ENCODE measurements at regions of chr7 and their contacts with region 1.

Region 1: GRCh38 chr7:151631968-151632749 is 112.5 kb upstream of the RHEB start:
- DNase-seq: peak; percentile 89
- H3K4me3 Mint-ChIP-seq: peak overlapping the region; percentile 100
- H3K27ac Mint-ChIP-seq: peak overlapping the region; percentile 100
- H3K4me1 Mint-ChIP-seq: peaks cover 25% of the 10 kb centered on the region
- H3K27me3 Mint-ChIP-seq: no peaks in the 10 kb centered on the region

Region 2: GRCh38 chr7:151351027-151351426 is 281.1 kb before region 1 on chr7:
- CTCF ChIA-PET with region 1: interaction called, 17 read pairs
- POLR2A ChIA-PET with region 1: interaction called, 8 read pairs
- DNase-seq: peak; percentile 57
- H3K4me3 Mint-ChIP-seq: peak overlapping the region; percentile 69
- H3K27ac Mint-ChIP-seq: peak overlapping the region; percentile 95
- H3K4me1 Mint-ChIP-seq: peaks cover 57% of the 10 kb centered on the region
- H3K27me3 Mint-ChIP-seq: no peaks in the 10 kb centered on the region

Region 3: GRCh38 chr7:151519765-151520418 is 112.3 kb before region 1 on chr7 and contains the start of gene RHEB:
- CTCF ChIA-PET with region 1: interaction called, 11 read pairs
- POLR2A ChIA-PET with region 1: interaction called, 43 read pairs
- DNase-seq: peak; percentile 99
- H3K4me3 Mint-ChIP-seq: peak within 1 kb of the TSS; percentile 92
- H3K27ac Mint-ChIP-seq: peak within 1 kb of the TSS; percentile 100
- H3K4me1 Mint-ChIP-seq: peaks cover 42% of the 10 kb centered on the region
- H3K27me3 Mint-ChIP-seq: peaks cover 4% of the 10 kb centered on the region
- total RNA-seq, gene RHEB: 82.8 to 85.1 TPM

Region 4: GRCh38 chr7:151759591-151760042 is 127.5 kb after region 1 on chr7:
- CTCF ChIA-PET with region 1: interaction called, 13 read pairs
- POLR2A ChIA-PET with region 1: interaction called, 15 read pairs
- DNase-seq: peak; percentile 61
- H3K4me3 Mint-ChIP-seq: no peak overlapping the region
- H3K27ac Mint-ChIP-seq: no peak overlapping the region
- H3K4me1 Mint-ChIP-seq: peaks cover 21% of the 10 kb centered on the region
- H3K27me3 Mint-ChIP-seq: no peaks in the 10 kb centered on the region

Region 5: DNA sequence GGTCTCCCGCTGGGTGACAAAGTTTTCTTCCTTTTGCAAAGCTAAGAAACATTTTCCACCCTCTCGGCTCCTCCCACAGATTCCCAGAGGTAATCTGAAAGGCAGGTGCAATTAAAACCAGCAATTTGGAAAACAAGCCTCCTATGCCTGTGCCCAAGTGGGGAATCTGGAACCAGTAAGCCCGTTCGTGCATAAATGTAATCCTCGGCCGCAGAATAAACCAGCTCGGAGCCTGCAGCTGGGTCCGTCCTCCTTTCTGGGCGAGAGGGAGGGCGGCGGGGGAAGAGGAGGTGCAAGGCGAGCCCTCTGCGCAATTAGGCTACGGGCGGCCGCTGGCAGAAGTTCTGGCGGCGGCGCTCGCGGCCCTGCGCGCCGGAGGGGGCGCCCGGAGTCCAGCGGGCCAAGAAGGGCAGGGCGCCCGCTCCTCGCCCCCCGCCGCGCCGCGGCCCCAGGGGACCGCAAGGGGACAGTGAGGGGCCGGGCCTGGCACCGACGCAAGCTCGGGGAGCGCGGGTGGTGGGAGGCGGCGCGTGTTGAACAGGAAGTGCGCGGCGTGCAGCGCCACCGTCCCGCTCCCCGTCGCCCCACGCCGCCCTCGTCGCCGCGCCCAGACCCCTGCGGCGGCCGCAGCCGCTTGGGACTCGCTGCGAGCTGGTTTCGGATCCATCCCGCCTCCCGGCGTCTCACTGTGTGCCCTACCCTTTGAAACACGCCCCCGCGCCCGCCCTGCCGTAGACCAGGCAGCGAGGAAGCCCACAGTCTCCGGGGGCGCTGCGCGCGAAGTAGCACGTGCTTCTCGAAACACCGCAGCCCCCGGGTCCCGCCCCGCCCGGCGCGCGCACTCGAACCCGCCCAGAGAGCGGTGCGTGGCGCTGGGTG is 245.0 kb after region 1 on chr7 and contains the start of gene PRKAG2:
- CTCF ChIA-PET with region 1: no interaction called
- POLR2A ChIA-PET with region 1: interaction called, 20 read pairs
- DNase-seq: peak; percentile 70
- H3K4me3 Mint-ChIP-seq: peak within 1 kb of the TSS; percentile 89
- H3K27ac Mint-ChIP-seq: peak within 1 kb of the TSS; percentile 69
- H3K4me1 Mint-ChIP-seq: peaks cover 11% of the 10 kb centered on the region
- H3K27me3 Mint-ChIP-seq: peaks cover 3% of the 10 kb centered on the region
- total RNA-seq, gene PRKAG2: 25.4 to 33.7 TPM